Activated CD4-positive, alpha-beta memory T cell treated with anti-CD3 and anti-CD28 coated beads for 36 hours (primary cell): ENCODE measurements at regions of chr21 and their contacts with region 1.

Region 1: DNA sequence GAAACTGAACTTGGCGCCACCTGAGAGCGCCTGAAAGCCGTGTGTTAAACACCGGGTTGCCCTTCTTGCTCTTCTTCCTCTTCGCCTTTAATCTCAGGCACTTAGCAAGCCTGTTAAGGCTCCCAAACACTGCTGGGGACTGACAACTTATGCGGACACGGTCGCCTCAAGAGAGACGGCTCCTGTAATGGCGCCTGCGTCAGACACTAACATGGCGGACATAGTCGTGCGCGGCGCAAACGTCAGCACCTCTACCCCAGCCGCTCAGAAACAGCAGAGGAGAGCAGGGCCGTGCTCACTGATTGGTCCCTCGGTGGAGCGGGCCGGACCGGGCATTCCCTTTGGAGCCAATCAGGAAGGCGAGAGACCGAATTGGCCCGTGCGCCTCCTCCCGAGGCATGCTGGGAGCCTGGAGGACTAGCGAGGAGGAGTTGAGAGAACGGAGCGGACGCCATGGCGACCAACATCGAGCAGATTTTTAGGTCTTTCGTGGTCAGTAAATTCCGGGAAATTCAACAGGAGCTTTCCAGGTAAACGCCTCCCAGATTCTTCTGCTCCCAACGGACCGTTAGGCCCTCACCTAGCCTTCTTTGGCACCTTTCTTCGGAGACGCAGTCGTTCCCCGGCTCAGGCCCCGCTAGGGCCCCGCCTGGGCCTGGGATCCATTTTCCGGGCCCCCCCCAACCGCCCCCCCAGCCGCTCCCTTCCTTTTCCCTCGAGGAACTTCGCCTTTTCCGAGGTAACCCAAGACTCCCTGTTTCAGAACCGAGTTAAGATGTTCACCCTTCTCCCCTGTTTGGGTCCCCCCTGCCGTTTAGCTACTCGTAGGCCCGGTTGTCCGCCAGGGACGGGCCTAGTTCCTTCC is at the start of gene SON:
- DNase-seq: peak; percentile 99
- H3K4me3 Mint-ChIP-seq: peak within 1 kb of the TSS; percentile 96
- H3K27ac Mint-ChIP-seq: peak within 1 kb of the TSS; percentile 100
- H3K4me1 Mint-ChIP-seq: peaks cover 26% of the 10 kb centered on the region
- H3K27me3 Mint-ChIP-seq: no peaks in the 10 kb centered on the region
- total RNA-seq, gene SON: 270 to 279 TPM

Region 2: DNA sequence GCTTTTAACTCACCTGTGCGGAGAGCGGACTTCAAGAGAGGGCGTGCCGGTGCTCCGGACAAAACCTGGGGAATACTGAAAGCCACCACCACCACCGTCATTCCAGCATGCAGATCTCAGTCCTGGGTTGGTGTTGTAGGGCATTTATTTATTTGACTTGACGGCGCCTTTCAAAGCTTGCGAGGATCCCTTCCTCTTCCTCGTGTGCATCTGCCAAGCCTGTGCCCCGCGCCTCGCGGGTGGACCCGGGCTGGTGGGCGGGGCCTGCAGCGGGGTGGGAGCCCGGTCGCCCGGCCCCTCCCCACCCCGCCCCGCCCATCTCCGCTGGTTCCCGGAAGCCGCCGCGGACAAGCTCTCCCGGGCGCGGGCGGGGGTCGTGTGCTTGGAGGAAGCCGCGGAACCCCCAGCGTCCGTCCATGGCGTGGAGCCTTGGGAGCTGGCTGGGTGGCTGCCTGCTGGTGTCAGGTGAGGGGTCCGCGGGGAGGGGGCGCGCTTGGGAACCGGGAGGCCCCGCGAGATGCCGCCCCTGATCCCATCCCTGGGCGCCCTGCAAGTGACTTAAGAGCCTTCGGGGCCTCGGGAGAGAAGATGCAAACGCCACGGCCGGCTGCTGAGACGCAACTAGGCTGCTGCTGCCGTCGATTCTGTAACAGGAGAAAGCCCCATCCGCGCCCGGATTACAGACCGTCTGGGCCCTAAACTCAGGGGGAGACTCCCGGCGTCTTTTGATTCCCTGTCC is 276.7 kb before region 1 on chr21 and contains the start of gene IL10RB:
- CTCF ChIA-PET with region 1: no interaction called
- POLR2A ChIA-PET with region 1: no interaction called
- intact Hi-C with region 1: loop called (anchors 5 kb)
- DNase-seq: peak; percentile 78
- H3K4me3 Mint-ChIP-seq: peak within 1 kb of the TSS; percentile 99
- H3K27ac Mint-ChIP-seq: peak within 1 kb of the TSS; percentile 97
- H3K4me1 Mint-ChIP-seq: peaks cover 55% of the 10 kb centered on the region
- H3K27me3 Mint-ChIP-seq: no peaks in the 10 kb centered on the region
- total RNA-seq, gene IL10RB: 31.3 to 32.5 TPM

Region 3: DNA sequence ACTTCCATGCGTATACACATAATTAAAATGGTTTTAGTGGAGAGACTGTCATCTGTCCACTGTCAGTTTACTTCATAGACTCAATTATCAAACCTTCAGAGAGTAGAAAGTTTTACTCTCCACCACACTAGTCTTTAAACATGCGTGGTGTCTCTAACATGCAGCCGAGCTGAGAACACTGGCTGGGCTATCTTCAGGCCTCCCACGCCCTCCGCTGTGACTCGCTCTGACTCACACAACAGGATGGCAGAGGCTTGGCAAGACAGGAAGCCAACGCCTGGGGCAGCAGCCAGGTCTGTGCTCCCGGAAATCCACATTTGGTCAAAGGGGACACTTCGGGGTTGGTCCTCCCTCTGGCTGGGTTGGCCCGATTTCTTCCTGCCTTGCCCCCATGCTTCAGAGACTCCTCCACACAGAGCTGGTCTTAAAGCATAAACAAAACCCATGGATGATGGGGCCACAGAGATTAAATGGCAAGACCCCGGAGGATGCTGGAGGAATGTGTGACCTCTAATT is 162.3 kb before region 1 on chr21:
- CTCF ChIA-PET with region 1: no interaction called
- POLR2A ChIA-PET with region 1: no interaction called
- intact Hi-C with region 1: loop called (anchors 1 kb)
- DNase-seq: peak; percentile 97
- H3K4me3 Mint-ChIP-seq: peak overlapping the region; percentile 44
- H3K27ac Mint-ChIP-seq: peak overlapping the region; percentile 81
- H3K4me1 Mint-ChIP-seq: peaks cover 61% of the 10 kb centered on the region
- H3K27me3 Mint-ChIP-seq: peaks cover 10% of the 10 kb centered on the region

Region 4: GRCh38 chr21:33491373-33492102 is 51.3 kb before region 1 on chr21 and contains the start of gene DNAJC28:
- CTCF ChIA-PET with region 1: no interaction called
- POLR2A ChIA-PET with region 1: interaction called, 7 read pairs
- intact Hi-C with region 1: loop called (anchors 1 kb)
- DNase-seq: peak; percentile 95
- H3K4me3 Mint-ChIP-seq: peak within 1 kb of the TSS; percentile 85
- H3K27ac Mint-ChIP-seq: peak within 1 kb of the TSS; percentile 81
- H3K4me1 Mint-ChIP-seq: peaks cover 9% of the 10 kb centered on the region
- H3K27me3 Mint-ChIP-seq: no peaks in the 10 kb centered on the region
- total RNA-seq, gene DNAJC28: 0.67 to 0.75 TPM

Region 5: DNA sequence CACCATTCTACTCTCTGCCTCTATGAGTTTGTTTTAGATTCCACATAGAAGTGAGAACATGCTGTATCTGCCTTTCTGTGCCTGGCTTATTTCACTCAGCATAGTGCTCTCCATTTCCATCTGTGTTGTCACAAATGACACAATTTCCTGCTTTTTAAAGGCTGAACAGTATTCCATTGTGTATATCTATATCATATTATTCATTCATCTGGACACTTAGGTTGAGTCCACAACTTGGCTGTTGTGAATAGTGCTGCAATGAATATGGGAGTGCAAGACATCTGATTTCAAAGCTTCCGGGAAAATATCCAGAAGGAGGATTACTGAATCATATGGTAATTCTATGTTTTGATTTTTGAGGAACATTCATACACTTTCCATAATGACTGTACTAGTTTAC is 65.7 kb after region 1 on chr21:
- CTCF ChIA-PET with region 1: interaction called, 29 read pairs
- POLR2A ChIA-PET with region 1: interaction called, 4 read pairs
- intact Hi-C with region 1: loop called (anchors 5 kb)
- DNase-seq: no peak
- H3K4me3 Mint-ChIP-seq: no peak overlapping the region
- H3K27ac Mint-ChIP-seq: no peak overlapping the region
- H3K4me1 Mint-ChIP-seq: no peaks in the 10 kb centered on the region
- H3K27me3 Mint-ChIP-seq: no peaks in the 10 kb centered on the region

Region 6: GRCh38 chr21:33915368-33916199 is 372.7 kb after region 1 on chr21 and contains the start of gene ATP5PO:
- CTCF ChIA-PET with region 1: no interaction called
- POLR2A ChIA-PET with region 1: no interaction called
- intact Hi-C with region 1: loop called (anchors 5 kb)
- DNase-seq: peak; percentile 98
- H3K4me3 Mint-ChIP-seq: peak within 1 kb of the TSS; percentile 99
- H3K27ac Mint-ChIP-seq: peak within 1 kb of the TSS; percentile 93
- H3K4me1 Mint-ChIP-seq: peaks cover 28% of the 10 kb centered on the region
- H3K27me3 Mint-ChIP-seq: no peaks in the 10 kb centered on the region
- total RNA-seq, gene ATP5PO: 208 to 210 TPM